ENCODE measurements at regions of chr6 and their contacts with region 1.

Region 1: GRCh38 chr6:147058786-147059434 is 145.3 kb upstream of the STXBP5 start:
- DNase-seq: no peak
- H3K4me3 ChIP-seq: no peak overlapping the region
- H3K27me3 ChIP-seq: no peaks in the 10 kb centered on the region
- CTCF ChIP-seq: no peak

Region 2: DNA sequence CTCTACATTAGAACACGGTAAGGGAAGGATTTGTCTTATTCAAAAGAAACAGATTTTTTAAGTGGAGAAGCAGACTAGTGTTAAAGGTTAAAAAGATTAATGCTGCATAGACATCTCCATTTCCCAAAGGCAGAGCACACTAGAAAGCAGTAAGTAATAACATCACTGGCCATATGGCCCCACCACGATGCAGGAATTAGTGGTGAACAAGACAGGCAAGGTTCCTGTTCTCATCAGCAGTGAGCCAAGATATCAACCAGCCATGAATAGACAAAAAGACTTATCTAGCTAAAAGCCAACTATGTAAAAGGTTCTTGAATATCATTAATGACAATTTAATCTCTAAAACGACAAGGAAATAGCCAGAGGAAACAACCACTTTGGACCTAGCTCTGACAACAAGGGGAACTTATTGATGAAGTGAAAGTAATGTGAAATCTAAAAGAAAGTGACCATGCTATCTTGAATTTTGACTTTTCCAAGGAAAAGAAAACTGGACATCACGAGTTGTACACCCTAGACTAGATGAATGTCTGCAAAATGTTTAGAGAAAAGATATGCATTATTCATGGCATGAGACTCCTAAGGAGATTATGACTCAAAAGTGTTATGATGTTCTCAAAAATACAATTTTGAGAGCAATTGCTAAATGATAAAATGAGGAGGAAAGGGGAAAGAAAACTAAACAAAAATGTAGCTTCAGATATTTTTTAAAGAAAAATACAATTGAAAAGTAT is 12.6 kb before region 1 on chr6:
- CTCF ChIA-PET with region 1: interaction called, 15 read pairs
- POLR2A ChIA-PET with region 1: no interaction called
- DNase-seq: no peak
- H3K4me3 ChIP-seq: no peak overlapping the region
- H3K27me3 ChIP-seq: no peaks in the 10 kb centered on the region
- CTCF ChIP-seq: no peak

Region 3: DNA sequence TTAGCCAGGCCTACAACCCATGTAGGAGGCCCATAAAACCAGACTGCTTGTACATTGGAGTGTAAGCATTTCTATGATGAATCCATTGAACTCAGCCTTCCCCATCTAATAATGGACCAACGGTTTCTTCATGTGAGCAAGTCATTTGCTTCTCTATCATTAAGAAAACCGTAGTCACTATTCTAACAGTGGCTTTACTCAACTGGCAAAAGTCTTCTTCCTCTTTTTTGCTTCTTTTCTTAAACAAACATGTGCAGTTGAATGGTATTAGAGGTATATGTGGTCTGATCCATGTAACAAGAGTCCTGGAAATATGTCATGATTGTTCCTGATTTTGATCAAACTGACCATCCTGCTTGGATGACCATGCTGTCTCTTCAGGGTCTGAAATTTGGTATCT is 12.9 kb after region 1 on chr6:
- CTCF ChIA-PET with region 1: no interaction called
- POLR2A ChIA-PET with region 1: no interaction called
- DNase-seq: no peak
- H3K4me3 ChIP-seq: no peak overlapping the region
- H3K27me3 ChIP-seq: no peaks in the 10 kb centered on the region; the same call in 1 of the 2 replicates
- CTCF ChIP-seq: no peak